ENCODE measurements at regions of chr4 and their contacts with region 1.

Region 1: DNA sequence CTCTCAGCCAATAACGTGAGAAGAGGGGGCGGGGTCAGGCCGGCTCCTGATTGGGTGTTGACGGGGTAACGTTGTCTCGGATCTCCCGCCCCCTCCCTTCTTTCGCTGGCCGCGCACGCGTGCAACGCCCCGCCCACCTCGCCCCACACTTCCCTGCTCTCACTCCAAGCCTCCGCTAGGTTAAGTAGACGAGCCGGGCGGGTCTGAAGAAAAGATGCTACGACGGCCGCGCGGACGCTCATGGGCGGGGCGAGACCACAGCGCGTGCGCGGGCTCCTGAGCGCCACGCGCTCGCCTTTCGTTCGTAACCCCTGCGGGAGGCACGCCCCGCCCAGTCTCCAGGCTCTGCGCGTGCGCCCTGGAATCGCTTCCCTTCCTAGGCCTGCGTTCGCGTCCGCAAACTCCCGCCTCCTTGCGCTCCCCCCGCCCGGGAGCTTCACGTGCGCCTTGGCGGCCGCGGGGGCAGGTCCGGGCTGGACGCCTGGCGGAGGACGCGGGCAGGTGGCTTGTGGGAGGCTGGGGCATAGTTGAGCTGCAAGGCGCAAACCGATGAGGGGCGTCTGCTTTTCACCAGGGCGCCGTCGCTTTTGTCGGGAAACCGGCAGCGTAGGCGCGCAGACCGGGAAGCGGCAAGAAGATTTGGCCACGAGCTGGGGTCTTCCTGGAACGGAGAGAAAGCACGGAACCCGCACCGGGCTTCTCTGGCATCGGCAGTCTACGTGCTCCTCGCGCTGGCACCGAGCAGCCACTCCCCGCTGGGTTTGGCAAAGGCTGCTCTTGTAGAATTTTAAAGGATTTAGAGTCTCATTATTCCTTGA is 467 bp upstream of the PGRMC2 start:
- DNase-seq: peak; percentile 99
- H3K4me3 Mint-ChIP-seq: peak overlapping the region; percentile 77
- H3K27ac Mint-ChIP-seq: peak overlapping the region; percentile 83
- H3K4me1 Mint-ChIP-seq: peaks cover 24% of the 10 kb centered on the region
- H3K27me3 Mint-ChIP-seq: no peaks in the 10 kb centered on the region
- CTCF ChIP-seq: no peak

Region 2: GRCh38 chr4:128060699-128061565 is 227.1 kb before region 1 on chr4 and contains the start of gene LARP1B:
- CTCF ChIA-PET with region 1: no interaction called
- POLR2A ChIA-PET with region 1: interaction called, 4 read pairs
- intact Hi-C with region 1: loop called (anchors 5 kb)
- DNase-seq: peak; percentile 97
- H3K4me3 Mint-ChIP-seq: peak within 1 kb of the TSS; percentile 91
- H3K27ac Mint-ChIP-seq: peak within 1 kb of the TSS; percentile 96
- H3K4me1 Mint-ChIP-seq: peaks cover 6% of the 10 kb centered on the region
- H3K27me3 Mint-ChIP-seq: no peaks in the 10 kb centered on the region
- CTCF ChIP-seq: no peak
- total RNA-seq, gene LARP1B: 56.1 and 62.8 TPM in 2 replicates

Region 3: DNA sequence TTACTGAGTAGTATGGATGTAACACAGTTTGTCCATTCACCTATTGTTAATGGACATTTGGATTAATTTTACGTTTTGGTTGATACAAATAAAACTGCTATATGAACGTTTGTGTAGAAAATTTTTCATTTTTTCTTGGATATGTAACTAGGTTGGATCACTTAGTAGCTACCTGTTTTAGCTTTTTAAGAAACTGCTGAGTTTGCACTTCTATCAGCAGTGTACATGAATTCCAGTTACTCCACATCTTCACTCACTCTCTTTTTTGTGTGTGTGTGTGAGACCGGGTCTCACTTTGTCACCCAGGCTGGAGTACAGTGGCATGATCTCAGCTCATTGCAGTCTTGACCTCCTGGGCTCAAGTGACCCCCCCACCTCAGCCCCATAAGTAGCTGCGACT is 211.6 kb before region 1 on chr4:
- CTCF ChIA-PET with region 1: no interaction called
- POLR2A ChIA-PET with region 1: no interaction called
- intact Hi-C with region 1: no loop called
- DNase-seq: no peak
- H3K4me3 Mint-ChIP-seq: no peak overlapping the region
- H3K27ac Mint-ChIP-seq: no peak overlapping the region
- H3K4me1 Mint-ChIP-seq: no peaks in the 10 kb centered on the region
- H3K27me3 Mint-ChIP-seq: no peaks in the 10 kb centered on the region
- CTCF ChIP-seq: no peak

Region 4: GRCh38 chr4:128145727-128146126 is 142.4 kb before region 1 on chr4:
- CTCF ChIA-PET with region 1: no interaction called
- POLR2A ChIA-PET with region 1: no interaction called
- intact Hi-C with region 1: no loop called
- DNase-seq: no peak
- H3K4me3 Mint-ChIP-seq: no peak overlapping the region
- H3K27ac Mint-ChIP-seq: no peak overlapping the region
- H3K4me1 Mint-ChIP-seq: no peaks in the 10 kb centered on the region
- H3K27me3 Mint-ChIP-seq: no peaks in the 10 kb centered on the region
- CTCF ChIP-seq: no peak

Region 5: DNA sequence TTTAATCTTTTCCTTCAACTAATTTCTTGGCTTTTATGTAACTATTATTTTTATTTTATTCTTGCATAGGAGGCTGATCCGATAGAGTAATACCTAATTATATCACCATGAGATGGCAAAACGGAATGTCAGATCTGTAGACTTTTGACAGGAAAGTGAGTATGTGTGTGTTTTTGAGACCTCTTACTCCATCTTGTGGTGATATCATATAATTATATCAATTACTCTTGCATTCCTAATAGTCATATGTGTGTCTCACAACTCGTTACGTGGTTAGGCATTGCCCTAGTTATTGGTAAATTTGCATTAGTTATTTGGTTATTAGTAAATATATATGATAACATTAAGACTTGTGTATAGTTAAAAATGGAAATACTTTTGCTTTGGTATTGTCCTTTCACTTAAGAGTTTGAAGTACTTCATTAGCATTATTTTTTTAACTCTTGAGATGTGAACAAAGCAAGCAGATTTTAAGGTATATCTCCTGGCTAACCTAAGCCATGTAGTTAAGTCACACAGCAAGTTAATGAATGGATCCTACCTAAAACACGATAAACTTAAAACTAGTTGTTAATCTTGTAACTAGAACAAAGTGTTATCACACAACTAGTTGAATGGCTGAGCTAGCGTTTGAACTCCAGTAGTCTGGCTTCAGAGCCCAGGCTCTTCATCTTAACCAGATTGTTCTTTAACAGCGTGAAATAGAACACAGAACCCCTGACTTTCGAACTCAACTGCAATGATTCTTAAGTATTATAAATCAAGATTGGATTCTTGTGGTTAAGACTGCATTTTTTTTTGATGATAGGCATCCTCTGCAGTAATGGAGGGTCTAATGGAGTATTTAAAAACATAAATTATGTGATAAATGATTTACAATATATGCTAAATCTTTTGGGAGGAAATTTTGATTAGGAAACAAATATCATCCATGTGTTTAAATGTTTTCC is 67.5 kb before region 1 on chr4:
- CTCF ChIA-PET with region 1: no interaction called
- POLR2A ChIA-PET with region 1: no interaction called
- intact Hi-C with region 1: loop called (anchors 5 kb)
- DNase-seq: peak; percentile 59
- H3K4me3 Mint-ChIP-seq: no peak overlapping the region
- H3K27ac Mint-ChIP-seq: no peak overlapping the region
- H3K4me1 Mint-ChIP-seq: no peaks in the 10 kb centered on the region
- H3K27me3 Mint-ChIP-seq: no peaks in the 10 kb centered on the region
- CTCF ChIP-seq: peak; percentile 29

Region 6: GRCh38 chr4:128275346-128275745 is 12.7 kb before region 1 on chr4:
- CTCF ChIA-PET with region 1: interaction called, 4 read pairs
- POLR2A ChIA-PET with region 1: interaction called, 34 read pairs
- intact Hi-C with region 1: no loop called
- DNase-seq: no peak
- H3K4me3 Mint-ChIP-seq: no peak overlapping the region
- H3K27ac Mint-ChIP-seq: no peak overlapping the region
- H3K4me1 Mint-ChIP-seq: peaks cover 6% of the 10 kb centered on the region
- H3K27me3 Mint-ChIP-seq: no peaks in the 10 kb centered on the region
- CTCF ChIP-seq: no peak

Region 7: GRCh38 chr4:128322995-128323394 is 34.9 kb after region 1 on chr4:
- CTCF ChIA-PET with region 1: interaction called, 4 read pairs
- POLR2A ChIA-PET with region 1: interaction called, 10 read pairs
- intact Hi-C with region 1: no loop called
- DNase-seq: peak; percentile 27
- H3K4me3 Mint-ChIP-seq: no peak overlapping the region
- H3K27ac Mint-ChIP-seq: no peak overlapping the region
- H3K4me1 Mint-ChIP-seq: peaks cover 6% of the 10 kb centered on the region
- H3K27me3 Mint-ChIP-seq: no peaks in the 10 kb centered on the region
- CTCF ChIP-seq: no peak

Region 8: GRCh38 chr4:128393101-128393704 is 105.1 kb after region 1 on chr4:
- CTCF ChIA-PET with region 1: interaction called, 5 read pairs
- POLR2A ChIA-PET with region 1: interaction called, 115 read pairs
- intact Hi-C with region 1: no loop called
- DNase-seq: no peak
- H3K4me3 Mint-ChIP-seq: no peak overlapping the region
- H3K27ac Mint-ChIP-seq: no peak overlapping the region
- H3K4me1 Mint-ChIP-seq: peaks cover 25% of the 10 kb centered on the region
- H3K27me3 Mint-ChIP-seq: no peaks in the 10 kb centered on the region
- CTCF ChIP-seq: no peak

Region 9: GRCh38 chr4:128553686-128554515 is 265.8 kb after region 1 on chr4:
- CTCF ChIA-PET with region 1: no interaction called
- POLR2A ChIA-PET with region 1: interaction called, 10 read pairs
- intact Hi-C with region 1: loop called (anchors 5 kb)
- DNase-seq: peak; percentile 25
- H3K4me3 Mint-ChIP-seq: peak overlapping the region; percentile 77
- H3K27ac Mint-ChIP-seq: peak overlapping the region; percentile 98
- H3K4me1 Mint-ChIP-seq: peaks cover 11% of the 10 kb centered on the region
- H3K27me3 Mint-ChIP-seq: no peaks in the 10 kb centered on the region
- CTCF ChIP-seq: no peak

Region 10: GRCh38 chr4:130008461-130008860 is 1720.4 kb after region 1 on chr4:
- CTCF ChIA-PET with region 1: no interaction called
- POLR2A ChIA-PET with region 1: no interaction called
- intact Hi-C with region 1: no loop called
- DNase-seq: no peak
- H3K4me3 Mint-ChIP-seq: no peak overlapping the region
- H3K27ac Mint-ChIP-seq: no peak overlapping the region
- H3K4me1 Mint-ChIP-seq: no peaks in the 10 kb centered on the region
- H3K27me3 Mint-ChIP-seq: no peaks in the 10 kb centered on the region
- CTCF ChIP-seq: no peak